AG04450 (cell line): ENCODE measurements at regions of chr16 and their contacts with region 1.

Region 1: DNA sequence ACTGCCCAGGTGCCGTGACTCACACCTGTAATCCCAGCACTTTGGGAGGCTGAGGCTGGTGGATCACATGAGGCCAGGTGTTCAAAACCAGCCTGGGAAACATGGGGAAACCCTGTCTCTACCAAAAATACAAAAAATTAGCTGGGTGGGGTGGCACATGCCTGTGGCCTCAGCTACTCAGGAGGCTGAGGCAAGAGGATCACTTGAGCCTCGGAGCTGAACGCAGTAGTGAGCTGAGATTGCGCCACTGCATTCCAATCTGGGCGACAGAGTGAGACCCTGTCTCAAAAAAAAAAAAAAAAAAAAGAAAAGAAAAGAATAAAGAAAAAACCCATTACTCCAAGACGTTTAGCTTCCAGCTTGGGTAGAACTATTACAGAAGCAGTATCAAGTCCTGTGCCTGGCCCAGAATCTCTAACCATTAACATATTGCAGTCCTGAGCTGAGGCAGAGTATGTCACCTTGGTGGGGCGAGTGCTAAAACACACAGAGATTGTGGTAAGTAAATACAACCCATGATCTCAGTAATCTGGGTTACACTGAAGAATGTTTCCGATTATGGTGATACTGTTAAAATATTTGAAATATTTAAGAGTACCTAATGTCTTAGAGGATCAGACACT is 23.2 kb upstream of the CFAP20 start:
- DNase-seq: no peak
- H3K4me3 ChIP-seq: no peak overlapping the region
- H3K27ac ChIP-seq: no peak overlapping the region
- H3K27me3 ChIP-seq: no peaks in the 10 kb centered on the region
- CTCF ChIP-seq: no peak

Region 2: DNA sequence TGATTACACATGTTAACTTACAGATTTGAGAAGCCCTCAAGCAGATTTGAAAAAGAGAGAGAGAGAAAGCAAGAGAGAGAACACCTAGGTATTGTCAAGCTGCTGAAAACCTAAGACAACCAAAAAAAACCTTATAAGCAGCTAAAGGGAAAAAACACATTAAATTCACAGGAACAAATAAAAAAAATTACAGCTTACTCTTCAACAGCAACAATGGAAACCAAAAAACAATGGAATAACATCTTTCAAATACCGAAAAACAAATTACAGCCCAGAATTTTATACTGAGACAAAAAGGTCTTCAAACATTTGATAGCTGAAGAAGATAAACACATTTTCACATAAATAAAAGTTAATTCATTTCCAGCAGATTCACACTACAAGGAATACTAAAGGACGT is 14.8 kb before region 1 on chr16:
- CTCF ChIA-PET with region 1: no interaction called
- POLR2A ChIA-PET with region 1: interaction called, 11 read pairs
- DNase-seq: no peak
- H3K4me3 ChIP-seq: no peak overlapping the region
- H3K27ac ChIP-seq: no peak overlapping the region
- H3K27me3 ChIP-seq: no peaks in the 10 kb centered on the region
- CTCF ChIP-seq: no peak